G401 (cell line): ENCODE measurements at regions of chr15 and their contacts with region 1.

Region 1: GRCh38 chr15:74172701-74173379 is 670 bp upstream of the ISLR start:
- DNase-seq: no peak

Region 2: GRCh38 chr15:73941044-73941443 is 231.8 kb before region 1 on chr15:
- in situ Hi-C with region 1: no loop called
- DNase-seq: no peak

Region 3: DNA sequence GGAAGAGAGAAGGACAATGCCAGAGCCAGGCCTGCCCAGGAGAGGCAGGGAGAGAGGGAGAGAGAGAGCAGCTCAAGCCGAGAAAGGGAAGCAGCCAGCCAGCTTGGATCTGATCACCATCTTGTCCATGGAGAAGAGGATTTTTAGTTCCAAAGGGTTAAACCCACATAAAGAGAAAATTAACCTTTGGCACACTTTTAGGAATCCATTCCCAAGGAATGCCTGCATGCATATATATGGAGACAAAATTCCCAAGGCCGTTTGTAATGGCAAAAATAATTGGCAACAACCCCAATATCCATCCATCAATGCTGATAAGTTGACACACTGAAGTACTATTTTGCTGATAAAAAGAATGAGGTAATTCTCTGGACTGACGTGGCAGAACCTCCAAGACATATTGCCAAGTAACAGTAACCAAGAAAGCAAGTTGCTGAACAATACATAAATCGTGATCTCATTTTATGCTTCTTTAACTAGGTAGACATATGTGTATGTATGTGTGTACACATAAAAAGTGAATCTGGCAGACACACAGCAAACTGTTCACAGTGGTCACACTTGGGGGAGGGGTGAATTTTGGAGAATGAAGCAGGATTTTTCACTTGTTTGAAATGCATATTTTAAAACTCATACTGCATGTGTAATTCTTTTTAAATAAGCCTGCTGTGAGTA is 37.3 kb after region 1 on chr15:
- in situ Hi-C with region 1: loop called (anchors 5 kb)
- DNase-seq: no peak